ENCODE measurements at regions of chr1 and their contacts with region 1.

Region 1: DNA sequence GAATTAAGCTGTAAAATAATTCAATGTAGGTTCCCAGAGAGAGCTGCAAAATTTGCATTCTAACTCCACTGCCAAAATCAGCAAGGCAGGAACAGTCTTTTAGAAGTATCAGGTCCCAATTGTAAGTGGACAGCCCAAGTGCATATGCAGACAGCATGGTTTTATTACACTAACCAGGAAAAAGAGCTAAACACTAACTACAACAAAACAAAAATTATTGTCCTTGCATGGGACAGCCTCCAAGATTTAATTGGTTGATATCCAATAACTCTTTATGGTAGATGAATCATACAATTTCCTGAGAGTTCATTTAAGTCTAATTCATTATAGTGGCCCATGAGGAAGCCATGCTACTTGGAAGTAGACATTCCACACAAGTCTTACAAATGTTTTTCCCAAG is 154.3 kb upstream of the ZNF648 start:
- DNase-seq: peak; percentile 28
- H3K4me3 Mint-ChIP-seq: no peak overlapping the region
- H3K27ac Mint-ChIP-seq: peak overlapping the region; percentile 7
- H3K4me1 Mint-ChIP-seq: peaks cover 32% of the 10 kb centered on the region
- H3K27me3 Mint-ChIP-seq: no peaks in the 10 kb centered on the region
- CTCF ChIP-seq: no peak

Region 2: DNA sequence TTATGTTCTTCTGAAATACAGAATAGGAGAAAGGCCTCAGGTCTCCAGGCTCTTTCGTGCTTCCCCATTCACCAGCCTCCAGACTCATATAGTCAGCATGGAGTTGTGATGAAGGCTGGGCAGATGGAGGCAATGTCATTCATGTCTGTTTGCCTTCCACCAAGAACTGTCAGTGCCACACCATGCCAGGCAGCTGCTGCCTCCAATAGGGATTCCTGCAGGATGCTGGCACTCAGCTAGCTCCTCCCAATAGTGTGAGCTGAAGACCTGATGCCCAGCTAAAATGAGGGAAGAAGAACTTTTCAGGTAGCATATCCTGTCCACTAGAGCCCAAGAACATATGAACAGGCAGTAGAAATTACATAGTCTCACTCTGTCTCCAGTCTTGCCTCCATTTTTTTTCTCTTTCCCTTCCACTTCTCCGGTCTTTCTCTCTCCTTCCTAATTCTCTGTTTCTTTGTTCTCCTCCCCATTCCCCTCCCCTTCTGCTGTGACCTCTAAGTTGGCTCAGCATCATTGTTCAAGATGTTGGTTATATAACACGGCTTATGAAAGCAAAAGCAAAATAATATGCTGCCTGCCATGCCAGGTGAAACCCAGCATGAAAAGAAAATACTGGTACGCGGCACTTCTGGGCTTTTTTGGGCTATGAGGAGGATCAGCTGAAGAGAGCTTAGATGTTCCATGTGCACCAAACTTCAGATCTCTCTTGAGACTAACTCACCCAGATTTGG is 158.5 kb after region 1 on chr1:
- CTCF ChIA-PET with region 1: no interaction called
- POLR2A ChIA-PET with region 1: interaction called, 37 read pairs
- intact Hi-C with region 1: no loop called
- DNase-seq: no peak
- H3K4me3 Mint-ChIP-seq: no peak overlapping the region
- H3K27ac Mint-ChIP-seq: no peak overlapping the region
- H3K4me1 Mint-ChIP-seq: peaks cover 7% of the 10 kb centered on the region
- H3K27me3 Mint-ChIP-seq: no peaks in the 10 kb centered on the region
- CTCF ChIP-seq: no peak

Region 3: GRCh38 chr1:182391362-182392044 is 175.7 kb after region 1 on chr1 and contains the start of gene GLUL:
- CTCF ChIA-PET with region 1: no interaction called
- POLR2A ChIA-PET with region 1: interaction called, 48 read pairs
- intact Hi-C with region 1: loop called (anchors 5 kb)
- DNase-seq: peak; percentile 90
- H3K4me3 Mint-ChIP-seq: peak within 1 kb of the TSS; percentile 100
- H3K27ac Mint-ChIP-seq: peak within 1 kb of the TSS; percentile 100
- H3K4me1 Mint-ChIP-seq: peaks cover 27% of the 10 kb centered on the region
- H3K27me3 Mint-ChIP-seq: no peaks in the 10 kb centered on the region
- CTCF ChIP-seq: peak; percentile 2
- total RNA-seq, gene GLUL: 240 and 437 TPM in 2 replicates

Measured in MCF 10A (cell line).